ENCODE measurements at regions of chr6 and their contacts with region 1.

Region 1: GRCh38 chr6:142378138-142378875 is 76.5 kb downstream of the ADGRG6 start:
- DNase-seq: no peak
- ATAC-seq: no peak
- H3K4me3 ChIP-seq: no peak overlapping the region
- H3K27ac ChIP-seq: peak overlapping the region; percentile 100
- H3K4me1 ChIP-seq: peaks cover 94% of the 10 kb centered on the region
- H3K27me3 ChIP-seq: no peaks in the 10 kb centered on the region
- CTCF ChIP-seq: no peak

Region 2: GRCh38 chr6:142323377-142324040 is 54.8 kb before region 1 on chr6:
- CTCF ChIA-PET with region 1: no interaction called
- POLR2A ChIA-PET with region 1: interaction called, 9 read pairs
- in situ Hi-C with region 1: no loop called
- intact Hi-C with region 1: loop called (anchors 5 kb)
- DNase-seq: peak; percentile 89
- ATAC-seq: peak; percentile 93
- H3K4me3 ChIP-seq: no peak overlapping the region
- H3K27ac ChIP-seq: peak overlapping the region; percentile 99
- H3K4me1 ChIP-seq: peaks cover 100% of the 10 kb centered on the region
- H3K27me3 ChIP-seq: no peaks in the 10 kb centered on the region
- CTCF ChIP-seq: no peak

Region 3: DNA sequence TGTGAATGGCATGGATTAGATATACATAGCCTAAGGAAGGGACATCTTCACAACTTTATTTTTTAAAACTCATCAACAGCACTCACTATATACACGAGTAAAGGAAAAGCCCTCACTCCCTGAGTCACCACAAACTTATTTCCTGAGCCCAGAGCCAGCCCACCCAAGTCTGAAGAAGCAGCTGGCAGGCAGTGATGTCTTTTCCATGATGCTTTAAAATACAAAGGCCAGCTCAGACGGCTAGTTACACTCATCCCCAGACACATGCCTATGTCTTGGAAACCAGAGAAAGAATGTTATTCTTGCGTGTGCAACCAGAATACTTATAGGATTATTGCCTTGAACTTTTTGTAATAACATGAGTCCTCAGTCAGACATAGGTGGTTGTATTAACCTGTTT is 37.9 kb after region 1 on chr6:
- CTCF ChIA-PET with region 1: no interaction called
- POLR2A ChIA-PET with region 1: no interaction called
- in situ Hi-C with region 1: no loop called
- intact Hi-C with region 1: no loop called
- DNase-seq: no peak
- ATAC-seq: no peak
- H3K4me3 ChIP-seq: no peak overlapping the region
- H3K27ac ChIP-seq: peak overlapping the region; percentile 61
- H3K4me1 ChIP-seq: peaks cover 35% of the 10 kb centered on the region
- H3K27me3 ChIP-seq: no peaks in the 10 kb centered on the region
- CTCF ChIP-seq: no peak

Region 4: DNA sequence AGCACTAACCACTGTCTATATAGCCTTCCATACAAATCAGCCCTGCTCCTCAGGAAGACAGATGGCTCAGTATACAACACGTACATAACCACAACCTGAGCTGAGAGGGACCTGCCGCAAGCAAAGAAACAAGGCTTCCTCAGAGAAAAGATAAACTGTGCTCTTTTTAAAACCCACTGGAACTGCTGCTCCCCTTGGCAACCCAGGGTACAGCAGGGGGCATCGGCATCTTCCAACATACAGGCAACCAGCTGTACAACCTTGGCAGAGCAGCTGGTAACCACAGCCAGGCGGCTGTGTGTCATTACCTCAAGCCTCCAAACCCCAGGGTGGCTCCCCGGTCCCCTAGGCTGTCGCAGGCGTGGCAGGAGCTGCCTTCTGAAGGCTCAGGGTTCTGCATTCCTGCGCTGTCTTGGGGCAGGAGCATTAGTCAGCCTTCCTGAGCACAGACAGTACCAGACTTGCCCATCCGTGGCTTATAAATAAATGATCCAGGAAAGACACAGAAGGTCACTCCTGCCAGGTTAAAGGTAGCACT is 173.0 kb after region 1 on chr6:
- CTCF ChIA-PET with region 1: no interaction called
- POLR2A ChIA-PET with region 1: no interaction called
- in situ Hi-C with region 1: no loop called
- intact Hi-C with region 1: no loop called
- DNase-seq: no peak
- ATAC-seq: peak; percentile 66
- H3K4me3 ChIP-seq: no peak overlapping the region
- H3K27ac ChIP-seq: no peak overlapping the region
- H3K4me1 ChIP-seq: no peaks in the 10 kb centered on the region
- H3K27me3 ChIP-seq: peaks cover 34% of the 10 kb centered on the region; the same call in 1 of the 2 replicates
- CTCF ChIP-seq: no peak